ENCODE measurements at regions of chr7 and their contacts with region 1.

Region 1: DNA sequence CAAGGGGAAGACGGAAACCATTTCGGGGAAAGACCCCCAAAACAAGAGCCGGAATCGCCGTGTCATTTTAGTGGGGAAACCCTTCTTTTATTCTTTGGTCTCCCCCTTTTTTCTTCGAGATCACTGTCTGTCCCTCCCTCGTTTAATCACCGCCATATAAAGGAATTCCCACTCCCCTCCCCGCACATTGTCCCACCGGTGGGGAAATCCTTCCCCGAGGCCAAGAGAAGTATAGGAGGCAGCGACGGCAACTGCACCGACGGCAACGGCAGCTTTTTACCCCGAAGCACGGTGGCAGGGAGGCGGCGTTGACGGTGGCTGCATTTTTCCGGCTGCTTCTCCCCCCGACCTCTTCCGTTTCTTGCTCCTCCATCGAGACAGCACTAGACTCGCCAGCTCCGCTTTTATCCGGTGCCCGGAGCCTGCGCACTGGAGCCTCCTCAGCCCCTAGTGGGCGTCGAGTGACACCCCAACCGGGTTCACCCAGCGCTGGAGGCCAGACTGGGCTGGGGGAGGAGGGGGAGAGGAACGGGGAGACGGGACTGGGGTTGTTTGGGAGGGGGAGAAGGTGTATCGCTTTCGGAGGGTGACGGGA is 687 bp upstream of the KMT2E start:
- DNase-seq: peak; percentile 85 to 99 (median 95)
- ATAC-seq: peak; percentile 59 to 61
- H3K4me3 Mint-ChIP-seq: peak overlapping the region; percentile 94 to 100 (median 98)
- H3K27ac Mint-ChIP-seq: peak overlapping the region; percentile 99 to 100 (median 100)
- H3K4me1 Mint-ChIP-seq: peaks cover 27 to 57% (median 41%) of the 10 kb centered on the region in 4 donors
- H3K27me3 Mint-ChIP-seq: peaks cover 0 to 12% (median 0%) of the 10 kb centered on the region in 5 donors

Region 2: DNA sequence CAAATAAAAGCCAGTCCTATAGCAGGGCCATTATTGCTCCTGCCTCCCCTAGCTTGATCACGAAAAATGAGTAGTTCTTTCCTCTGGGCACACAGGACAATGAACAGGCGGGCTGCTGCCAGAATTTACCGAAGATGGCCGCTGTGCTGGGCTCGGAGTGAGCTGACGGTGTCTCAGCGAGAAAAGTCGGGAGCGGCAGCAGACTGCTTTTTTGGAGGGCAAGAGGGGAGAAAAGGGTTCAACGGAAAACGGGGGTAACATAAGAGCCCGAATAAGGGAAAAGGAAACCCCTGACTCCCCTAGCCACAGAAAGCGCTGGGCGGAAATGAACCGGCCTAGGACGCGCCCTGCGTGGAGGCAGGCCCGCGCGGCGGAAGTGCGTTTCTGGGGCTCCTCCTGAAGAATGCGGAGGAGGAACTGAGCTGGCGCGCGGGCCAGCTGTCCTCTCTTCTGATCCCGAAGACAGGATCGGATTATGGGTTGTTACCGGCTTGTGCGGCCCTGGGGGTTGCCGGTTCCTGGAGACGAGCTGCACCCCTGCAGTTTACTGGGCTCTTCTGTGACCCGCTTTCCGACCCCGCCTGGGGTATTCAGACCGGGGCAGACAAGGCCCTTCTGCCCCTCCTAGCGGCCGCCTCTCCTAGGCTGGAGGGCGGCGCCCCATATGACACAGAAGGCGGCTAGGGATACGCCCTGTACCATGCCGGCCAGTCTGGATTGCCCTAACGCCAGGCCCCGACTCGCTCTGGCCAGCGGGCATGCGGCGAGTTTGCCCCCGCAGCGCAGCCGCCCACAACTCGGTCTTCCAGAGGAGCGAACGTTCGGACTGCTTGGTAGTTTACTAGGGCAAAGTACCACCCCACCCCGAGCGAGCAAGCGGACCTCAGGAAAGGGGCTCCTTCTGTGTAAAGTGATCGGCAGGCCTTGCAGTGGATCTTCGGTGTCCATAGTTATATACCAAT is 29.5 kb before region 1 on chr7:
- POLR2A ChIA-PET with region 1: interaction called, 500 read pairs
- DNase-seq: peak; percentile 71 to 90 (median 80)
- ATAC-seq: peak; percentile 85 to 88
- H3K4me3 Mint-ChIP-seq: peak overlapping the region; percentile 96 to 100 (median 100)
- H3K27ac Mint-ChIP-seq: peak overlapping the region in 9 of 10 donors; percentile 99 to 100 (median 100)
- H3K4me1 Mint-ChIP-seq: peaks cover 19 to 73% (median 54%) of the 10 kb centered on the region in 4 donors
- H3K27me3 Mint-ChIP-seq: peaks cover 0 to 1% (median 0%) of the 10 kb centered on the region in 5 donors

Region 3: DNA sequence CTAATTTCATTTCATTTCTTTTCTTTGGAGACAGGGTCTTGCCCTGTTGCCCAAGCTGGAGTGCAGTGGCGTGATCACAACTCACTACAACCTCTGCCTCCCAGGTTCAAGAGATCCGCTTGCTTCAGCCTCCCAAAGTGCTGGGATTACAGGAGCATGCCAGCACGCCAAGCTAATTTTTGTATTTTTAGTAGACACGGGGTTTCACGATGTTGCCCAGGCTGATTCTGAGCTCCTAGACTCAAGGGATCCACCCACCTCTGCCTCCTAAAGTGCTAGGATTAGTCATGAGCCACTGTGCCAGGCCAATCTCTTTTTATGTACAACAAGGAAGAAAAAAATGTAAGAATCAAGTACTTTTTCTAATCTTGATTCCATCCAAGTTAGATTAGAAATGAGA is 10.0 kb before region 1 on chr7:
- POLR2A ChIA-PET with region 1: interaction called, 30 read pairs
- DNase-seq: no peak
- ATAC-seq: peak; percentile 61 to 72
- H3K4me3 Mint-ChIP-seq: peak overlapping the region; percentile 49 to 79 (median 66)
- H3K27ac Mint-ChIP-seq: peak overlapping the region; percentile 34 to 92 (median 86)
- H3K4me1 Mint-ChIP-seq: peaks cover 35 to 96% (median 89%) of the 10 kb centered on the region in 4 donors
- H3K27me3 Mint-ChIP-seq: no peaks in the 10 kb centered on the region

Region 4: DNA sequence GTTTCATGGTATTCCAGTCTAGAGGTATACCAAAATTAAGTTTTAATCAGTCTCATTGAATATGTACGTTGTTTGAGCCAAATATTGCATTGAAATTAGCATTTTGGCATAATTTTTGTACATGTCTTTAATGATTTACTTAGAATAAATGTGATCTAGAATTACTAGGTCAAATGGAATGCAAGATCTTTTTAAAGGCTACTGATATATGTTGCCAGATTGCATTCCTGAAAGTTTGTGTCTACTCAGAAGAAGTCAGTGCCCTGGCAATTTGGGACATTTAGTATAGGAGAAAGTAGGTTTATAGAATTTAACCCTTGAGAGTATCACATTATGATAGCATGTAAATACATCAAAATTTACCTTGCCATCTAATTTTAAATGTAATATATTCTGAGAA is 33.1 kb after region 1 on chr7:
- POLR2A ChIA-PET with region 1: interaction called, 15 read pairs
- DNase-seq: no peak
- ATAC-seq: no peak
- H3K4me3 Mint-ChIP-seq: peak overlapping the region in 2 of 10 donors; percentile 6 to 22
- H3K27ac Mint-ChIP-seq: peak overlapping the region in 7 of 10 donors; percentile 26 to 64 (median 38)
- H3K4me1 Mint-ChIP-seq: peaks cover 16 to 65% (median 57%) of the 10 kb centered on the region in 4 donors
- H3K27me3 Mint-ChIP-seq: no peaks in the 10 kb centered on the region

Measured in naive thymus-derived CD8-positive, alpha-beta T cell (primary cell).